ENCODE measurements at regions of chr9 and their contacts with region 1.

Region 1: GRCh38 chr9:127525401-127526187 is 74.3 kb downstream of the LRSAM1 start:
- DNase-seq: no peak
- H3K4me3 ChIP-seq: no peak overlapping the region
- H3K27ac ChIP-seq: no peak overlapping the region
- H3K4me1 ChIP-seq: peaks cover 6 to 31% (median 11%) of the 10 kb centered on the region in 4 experiments
- H3K27me3 ChIP-seq: no peaks in the 10 kb centered on the region
- CTCF ChIP-seq: peak in 2 of 3 experiments; percentile 64 to 80; a peak in 3 of 4 replicates
- EP300 ChIP-seq: no peak
- POLR2A ChIP-seq: no peak
- RAD21 ChIP-seq: peak; percentile 54 to 61

Region 2: DNA sequence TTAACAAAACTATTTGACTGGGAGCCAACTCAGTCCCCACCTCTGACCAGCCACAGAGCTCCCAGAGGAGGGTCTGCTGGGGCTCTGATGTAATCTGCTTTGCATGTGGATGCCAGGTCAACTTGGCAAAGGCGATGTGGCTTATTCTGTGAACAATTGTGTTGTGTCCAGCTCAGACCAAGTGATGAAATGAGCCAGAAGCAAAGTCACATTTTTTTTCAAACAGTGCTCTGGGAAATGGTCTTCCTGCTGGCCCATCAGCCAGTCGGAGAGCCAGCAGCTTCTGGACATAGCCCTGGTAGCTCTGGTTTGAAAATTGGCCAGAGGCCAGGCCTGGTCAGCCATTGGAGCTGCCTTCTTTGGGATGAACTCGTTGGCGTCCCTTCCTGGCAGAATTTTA is 489.6 kb before region 1 on chr9:
- CTCF ChIA-PET with region 1: no interaction called
- POLR2A ChIA-PET with region 1: no interaction called
- DNase-seq: no peak
- H3K4me3 ChIP-seq: no peak overlapping the region
- H3K27ac ChIP-seq: no peak overlapping the region
- H3K4me1 ChIP-seq: no peaks in the 10 kb centered on the region
- H3K27me3 ChIP-seq: no peaks in the 10 kb centered on the region
- CTCF ChIP-seq: no peak
- EP300 ChIP-seq: no peak
- POLR2A ChIP-seq: no peak
- RAD21 ChIP-seq: no peak

Region 3: GRCh38 chr9:127463911-127464310 is 61.7 kb before region 1 on chr9:
- CTCF ChIA-PET with region 1: no interaction called
- POLR2A ChIA-PET with region 1: no interaction called
- DNase-seq: no peak
- H3K4me3 ChIP-seq: no peak overlapping the region
- H3K27ac ChIP-seq: no peak overlapping the region
- H3K4me1 ChIP-seq: no peaks in the 10 kb centered on the region
- H3K27me3 ChIP-seq: no peaks in the 10 kb centered on the region; a peak in 1 of 7 replicates
- CTCF ChIP-seq: no peak
- EP300 ChIP-seq: no peak
- POLR2A ChIP-seq: no peak
- RAD21 ChIP-seq: no peak

Region 4: DNA sequence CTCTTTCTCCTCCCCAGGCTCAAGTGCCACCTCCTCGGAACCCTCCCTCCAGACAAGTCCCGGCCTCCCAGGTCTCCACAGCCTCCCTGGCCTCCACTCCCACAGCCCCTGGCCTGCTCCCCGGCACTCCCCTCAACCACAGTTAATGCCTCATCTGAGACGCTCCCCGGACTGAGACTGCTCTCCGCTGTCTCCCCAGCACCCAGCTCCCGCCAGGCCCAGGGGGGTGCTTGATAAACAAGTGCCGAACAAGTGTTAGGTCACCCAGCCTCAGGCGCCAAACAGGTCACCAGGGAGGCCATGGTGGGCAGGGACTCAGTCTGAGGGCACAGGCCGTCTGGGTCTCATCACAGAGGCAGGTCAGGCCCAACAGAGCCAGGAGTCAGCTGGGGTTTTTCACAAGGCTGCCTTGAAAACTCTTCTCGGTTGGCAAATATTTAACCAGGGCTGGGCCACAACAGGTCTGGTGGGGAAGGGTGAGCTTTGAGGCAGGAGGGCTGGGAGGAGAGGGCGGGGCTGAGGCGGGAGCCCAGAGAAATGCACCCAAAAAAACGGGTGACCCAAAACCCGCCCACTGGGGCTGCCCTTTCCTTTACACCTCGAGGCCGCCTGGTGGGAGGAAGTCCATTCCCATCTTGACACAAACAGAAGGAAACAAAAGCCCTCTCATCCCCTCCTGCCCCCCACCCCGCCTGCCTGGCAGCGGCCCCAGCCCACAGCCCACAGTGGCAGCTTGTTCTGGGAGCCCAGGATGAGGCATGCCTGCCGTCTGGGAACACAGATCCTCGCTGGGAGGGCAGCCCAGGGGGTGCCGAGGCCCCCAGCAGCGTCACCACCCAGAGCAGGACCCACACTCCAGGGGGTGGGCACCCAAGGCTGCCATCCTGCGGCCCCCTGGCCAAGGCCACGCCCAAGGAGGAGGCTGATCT is 19.9 kb after region 1 on chr9:
- CTCF ChIA-PET with region 1: interaction called, 105 read pairs
- POLR2A ChIA-PET with region 1: interaction called, 3 read pairs
- DNase-seq: no peak
- H3K4me3 ChIP-seq: no peak overlapping the region
- H3K27ac ChIP-seq: peak overlapping the region; percentile 18; the same call in 1 of the 2 replicates
- H3K4me1 ChIP-seq: peaks cover 0 to 20% (median 8%) of the 10 kb centered on the region in 4 experiments; a peak in 5 of 7 replicates
- H3K27me3 ChIP-seq: no peaks in the 10 kb centered on the region
- CTCF ChIP-seq: no peak
- EP300 ChIP-seq: no peak
- POLR2A ChIP-seq: no peak
- RAD21 ChIP-seq: no peak

Region 5: DNA sequence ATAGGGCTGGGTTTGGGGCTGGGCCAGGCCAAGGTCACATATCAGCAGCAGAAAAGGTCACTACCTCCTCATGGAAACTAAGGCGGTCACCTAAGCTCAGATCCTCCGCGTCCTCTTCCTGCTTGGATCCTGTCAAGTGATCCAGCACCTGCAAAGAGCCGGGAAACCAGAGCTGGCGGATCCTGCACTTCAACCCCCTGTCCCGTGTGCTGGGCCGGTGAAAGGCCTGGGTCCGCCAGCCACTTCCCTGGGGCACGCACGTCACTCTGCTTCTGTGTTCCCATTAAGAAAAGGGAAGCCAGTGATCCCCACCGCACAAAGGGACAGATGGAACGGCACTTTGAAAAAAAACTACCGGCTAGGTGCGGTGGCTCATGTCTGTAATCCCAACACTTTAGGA is 25.2 kb after region 1 on chr9:
- CTCF ChIA-PET with region 1: interaction called, 22 read pairs
- POLR2A ChIA-PET with region 1: interaction called, 3 read pairs
- DNase-seq: no peak
- H3K4me3 ChIP-seq: no peak overlapping the region
- H3K27ac ChIP-seq: no peak overlapping the region
- H3K4me1 ChIP-seq: peaks cover 0 to 19% (median 5%) of the 10 kb centered on the region in 4 experiments; a peak in 6 of 7 replicates
- H3K27me3 ChIP-seq: no peaks in the 10 kb centered on the region
- CTCF ChIP-seq: no peak
- EP300 ChIP-seq: no peak
- POLR2A ChIP-seq: no peak
- RAD21 ChIP-seq: no peak

Region 6: DNA sequence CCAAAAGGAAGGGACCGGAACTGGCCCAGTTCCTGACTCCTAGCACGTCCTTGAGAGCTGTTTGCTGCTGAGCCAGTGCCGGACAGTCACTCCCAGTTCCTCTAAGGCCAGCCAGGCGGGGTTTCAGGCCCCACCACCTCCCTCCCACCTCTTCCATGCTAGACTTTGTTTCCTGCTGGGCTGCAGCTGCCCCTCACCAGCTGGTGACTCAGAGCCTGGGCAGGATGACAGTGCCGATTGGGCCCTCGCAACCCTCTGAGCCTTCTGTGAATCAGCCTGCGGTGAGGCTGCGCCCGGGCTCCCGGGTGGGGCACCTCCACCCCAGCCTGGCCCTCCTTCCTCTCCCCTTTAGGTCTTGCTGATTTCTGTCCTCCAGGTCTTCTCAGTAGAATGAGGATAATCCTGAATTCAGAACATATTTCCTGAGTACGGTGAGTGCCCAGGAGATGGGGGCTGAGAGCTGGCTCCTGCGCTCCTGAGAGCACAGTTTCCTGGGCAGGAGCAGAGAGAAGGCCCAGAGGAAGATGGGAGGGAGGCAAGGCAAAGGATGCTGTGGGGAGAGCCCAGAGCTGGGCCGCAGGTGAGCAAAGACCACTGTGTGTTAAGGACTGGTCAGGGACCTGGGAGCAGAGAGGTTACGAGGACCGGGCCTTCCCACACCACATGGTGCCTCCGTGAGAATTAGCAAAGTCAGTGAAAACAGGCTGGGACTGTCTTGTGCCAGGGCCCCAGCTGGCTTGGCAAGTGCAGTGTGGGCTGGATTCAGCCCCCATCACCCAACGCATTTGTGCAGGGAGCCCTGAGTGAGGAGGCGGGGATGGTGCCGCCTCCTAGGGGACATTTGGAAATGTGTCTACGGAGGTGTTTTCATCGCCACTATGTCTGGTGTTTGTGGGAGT is 53.6 kb after region 1 on chr9:
- CTCF ChIA-PET with region 1: interaction called, 73 read pairs
- POLR2A ChIA-PET with region 1: no interaction called
- DNase-seq: no peak
- H3K4me3 ChIP-seq: no peak overlapping the region
- H3K27ac ChIP-seq: no peak overlapping the region
- H3K4me1 ChIP-seq: peaks cover 0 to 11% (median 8%) of the 10 kb centered on the region in 4 experiments; a peak in 6 of 7 replicates
- H3K27me3 ChIP-seq: no peaks in the 10 kb centered on the region
- CTCF ChIP-seq: peak; percentile 50 to 56 (median 50)
- EP300 ChIP-seq: no peak
- POLR2A ChIP-seq: no peak
- RAD21 ChIP-seq: peak; percentile 38 to 56; a peak in 3 of 4 replicates

Measured in H1 (cell line).